ENCODE measurements at regions of chr11 and their contacts with region 1.

Region 1: GRCh38 chr11:64298966-64299846 is 952 bp upstream of the CATSPERZ start:
- DNase-seq: peak; percentile 53 to 83 (median 69)
- ATAC-seq: peak in 3 of 4 donors; percentile 52 to 60 (median 54)
- H3K4me3 ChIP-seq: peak overlapping the region; percentile 5 to 57 (median 44)
- H3K27ac ChIP-seq: peak overlapping the region in 3 of 12 donors; percentile 39 to 63 (median 43)
- H3K4me1 ChIP-seq: peaks cover 4 to 36% (median 26%) of the 10 kb centered on the region in 12 donors
- H3K27me3 ChIP-seq: peaks cover 8 to 70% (median 48%) of the 10 kb centered on the region in 9 donors
- CTCF ChIP-seq: no peak
- POLR2A ChIP-seq: no peak

Region 2: GRCh38 chr11:64204464-64204989 is 94.7 kb before region 1 on chr11:
- intact Hi-C with region 1: loop called (anchors 1 to 5 kb)
- DNase-seq: peak; percentile 83 to 91 (median 85)
- ATAC-seq: peak; percentile 48 to 65 (median 57)
- H3K4me3 ChIP-seq: no peak overlapping the region
- H3K27ac ChIP-seq: peak overlapping the region in 2 of 12 donors; percentile 44 to 98
- H3K4me1 ChIP-seq: peaks cover 0 to 47% (median 27%) of the 10 kb centered on the region in 12 donors
- H3K27me3 ChIP-seq: no peaks in the 10 kb centered on the region
- CTCF ChIP-seq: peak; percentile 55 to 84 (median 68)
- POLR2A ChIP-seq: no peak

Region 3: GRCh38 chr11:64246871-64247728 is 52.1 kb before region 1 on chr11 and contains the start of gene PPP1R14B:
- intact Hi-C with region 1: loop called in 5 of 10 experiments (anchors 2 to 10 kb)
- DNase-seq: peak; percentile 90 to 94 (median 93)
- ATAC-seq: peak; percentile 58 to 74 (median 68)
- H3K4me3 ChIP-seq: peak within 1 kb of the TSS; percentile 56 to 90 (median 72)
- H3K27ac ChIP-seq: peak within 1 kb of the TSS; percentile 49 to 96 (median 92)
- H3K4me1 ChIP-seq: peaks cover 5 to 65% (median 37%) of the 10 kb centered on the region in 12 donors
- H3K27me3 ChIP-seq: no peaks in the 10 kb centered on the region
- CTCF ChIP-seq: peak in 7 of 12 donors; percentile 8 to 31 (median 18)
- POLR2A ChIP-seq: peak in 1 of 2 donors; percentile 50
- total RNA-seq, gene PPP1R14B: 69.6 to 244 (median 90.4) TPM

Region 4: DNA sequence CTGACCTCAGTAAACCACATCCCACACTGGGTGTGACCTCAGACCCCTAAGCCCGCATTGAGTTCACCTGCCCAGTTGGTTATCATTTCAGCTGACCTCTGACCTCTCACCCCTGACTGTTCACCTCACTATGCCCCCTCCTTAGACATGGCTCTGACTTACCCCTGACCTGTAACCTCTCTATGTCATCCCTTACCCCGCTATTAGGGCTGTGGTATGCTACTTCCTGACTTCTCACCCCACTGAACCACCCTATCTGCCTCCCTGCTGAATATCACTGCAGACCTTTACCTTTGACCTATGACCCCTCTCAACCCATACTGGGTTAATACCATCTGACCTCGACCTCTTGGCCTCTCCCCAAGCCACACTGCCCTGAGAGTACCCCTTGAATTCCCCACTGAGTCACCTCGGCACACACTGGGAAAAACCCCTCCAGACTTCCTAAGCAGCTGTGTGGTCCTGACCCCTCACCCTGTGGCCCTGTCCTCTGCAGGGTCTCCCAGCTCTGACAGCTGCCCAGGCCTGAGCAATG is 39.6 kb before region 1 on chr11:
- intact Hi-C with region 1: loop called in 3 of 10 experiments (anchors 5 to 10 kb)
- DNase-seq: no peak
- ATAC-seq: no peak
- H3K4me3 ChIP-seq: no peak overlapping the region
- H3K27ac ChIP-seq: no peak overlapping the region
- H3K4me1 ChIP-seq: no peaks in the 10 kb centered on the region
- H3K27me3 ChIP-seq: no peaks in the 10 kb centered on the region
- CTCF ChIP-seq: no peak
- POLR2A ChIP-seq: no peak

Region 5: GRCh38 chr11:64275044-64275815 is 24.0 kb before region 1 on chr11:
- intact Hi-C with region 1: loop called in 2 of 10 experiments (anchors 2 kb)
- DNase-seq: peak in 1 of 5 donors; percentile 37
- ATAC-seq: no peak
- H3K4me3 ChIP-seq: no peak overlapping the region
- H3K27ac ChIP-seq: no peak overlapping the region
- H3K4me1 ChIP-seq: peaks cover 0 to 25% (median 11%) of the 10 kb centered on the region in 12 donors
- H3K27me3 ChIP-seq: no peaks in the 10 kb centered on the region
- CTCF ChIP-seq: no peak
- POLR2A ChIP-seq: no peak